MCF 10A (cell line): ENCODE measurements at regions of chrX and their contacts with region 1.

Region 1: GRCh38 chrX:51420610-51421009 is 75.8 kb downstream of the NUDT11 start:
- DNase-seq: peak; percentile 60
- H3K4me3 Mint-ChIP-seq: no peak overlapping the region
- H3K27ac Mint-ChIP-seq: no peak overlapping the region
- H3K4me1 Mint-ChIP-seq: no peaks in the 10 kb centered on the region
- H3K27me3 Mint-ChIP-seq: peaks cover 38% of the 10 kb centered on the region
- CTCF ChIP-seq: peak; percentile 50

Region 2: GRCh38 chrX:51144852-51145442 is 275.7 kb before region 1 on chrX:
- CTCF ChIA-PET with region 1: interaction called, 13 read pairs
- POLR2A ChIA-PET with region 1: no interaction called
- intact Hi-C with region 1: loop called (anchors 2 kb)
- DNase-seq: peak; percentile 61
- H3K4me3 Mint-ChIP-seq: no peak overlapping the region
- H3K27ac Mint-ChIP-seq: no peak overlapping the region
- H3K4me1 Mint-ChIP-seq: no peaks in the 10 kb centered on the region
- H3K27me3 Mint-ChIP-seq: peaks cover 94% of the 10 kb centered on the region
- CTCF ChIP-seq: peak; percentile 68

Region 3: GRCh38 chrX:51336584-51336983 is 84.0 kb before region 1 on chrX:
- CTCF ChIA-PET with region 1: interaction called, 26 read pairs
- POLR2A ChIA-PET with region 1: interaction called, 3 read pairs
- intact Hi-C with region 1: loop called (anchors 1 kb)
- DNase-seq: peak; percentile 24
- H3K4me3 Mint-ChIP-seq: no peak overlapping the region
- H3K27ac Mint-ChIP-seq: no peak overlapping the region
- H3K4me1 Mint-ChIP-seq: no peaks in the 10 kb centered on the region
- H3K27me3 Mint-ChIP-seq: peaks cover 12% of the 10 kb centered on the region
- CTCF ChIP-seq: peak; percentile 39

Region 4: GRCh38 chrX:51406688-51407461 is 13.7 kb before region 1 on chrX:
- CTCF ChIA-PET with region 1: interaction called, 23 read pairs
- POLR2A ChIA-PET with region 1: no interaction called
- intact Hi-C with region 1: no loop called
- DNase-seq: no peak
- H3K4me3 Mint-ChIP-seq: no peak overlapping the region
- H3K27ac Mint-ChIP-seq: no peak overlapping the region
- H3K4me1 Mint-ChIP-seq: no peaks in the 10 kb centered on the region
- H3K27me3 Mint-ChIP-seq: peaks cover 40% of the 10 kb centered on the region
- CTCF ChIP-seq: no peak